ENCODE measurements at regions of chr11 and their contacts with region 1.

Region 1: GRCh38 chr11:47373876-47374720 is 4.2 kb downstream of the SPI1 start:
- DNase-seq: peak in 1 of 2 experiments; percentile 76
- H3K4me3 ChIP-seq: no peak overlapping the region
- H3K27ac ChIP-seq: no peak overlapping the region
- H3K4me1 ChIP-seq: no peaks in the 10 kb centered on the region
- H3K27me3 ChIP-seq: no peaks in the 10 kb centered on the region
- CTCF ChIP-seq: peak; percentile 98

Region 2: DNA sequence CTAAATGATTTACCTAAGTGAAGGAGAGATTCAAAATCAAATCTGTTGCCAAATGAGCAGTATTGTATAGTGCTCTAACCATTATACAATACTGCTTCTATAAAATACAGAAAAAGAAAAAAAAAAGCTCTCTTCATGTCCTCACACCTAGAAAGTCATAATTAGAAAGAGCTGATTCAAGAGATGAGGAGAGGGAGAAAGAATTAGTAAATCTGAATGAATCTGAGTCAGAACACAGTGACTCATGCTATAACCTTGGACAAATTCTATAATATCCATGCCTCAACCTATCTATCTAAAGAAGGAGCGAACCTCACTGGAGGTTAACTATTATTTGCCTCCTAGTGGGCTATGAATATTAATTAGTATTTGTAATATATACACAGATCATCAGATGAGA is 809.6 kb before region 1 on chr11:
- CTCF ChIA-PET with region 1: interaction called, 10 read pairs
- POLR2A ChIA-PET with region 1: no interaction called
- intact Hi-C with region 1: no loop called
- DNase-seq: peak in 1 of 2 experiments; percentile 71
- H3K4me3 ChIP-seq: no peak overlapping the region
- H3K27ac ChIP-seq: peak overlapping the region; percentile 73
- H3K4me1 ChIP-seq: peaks cover 53% of the 10 kb centered on the region
- H3K27me3 ChIP-seq: no peaks in the 10 kb centered on the region
- CTCF ChIP-seq: no peak

Region 3: DNA sequence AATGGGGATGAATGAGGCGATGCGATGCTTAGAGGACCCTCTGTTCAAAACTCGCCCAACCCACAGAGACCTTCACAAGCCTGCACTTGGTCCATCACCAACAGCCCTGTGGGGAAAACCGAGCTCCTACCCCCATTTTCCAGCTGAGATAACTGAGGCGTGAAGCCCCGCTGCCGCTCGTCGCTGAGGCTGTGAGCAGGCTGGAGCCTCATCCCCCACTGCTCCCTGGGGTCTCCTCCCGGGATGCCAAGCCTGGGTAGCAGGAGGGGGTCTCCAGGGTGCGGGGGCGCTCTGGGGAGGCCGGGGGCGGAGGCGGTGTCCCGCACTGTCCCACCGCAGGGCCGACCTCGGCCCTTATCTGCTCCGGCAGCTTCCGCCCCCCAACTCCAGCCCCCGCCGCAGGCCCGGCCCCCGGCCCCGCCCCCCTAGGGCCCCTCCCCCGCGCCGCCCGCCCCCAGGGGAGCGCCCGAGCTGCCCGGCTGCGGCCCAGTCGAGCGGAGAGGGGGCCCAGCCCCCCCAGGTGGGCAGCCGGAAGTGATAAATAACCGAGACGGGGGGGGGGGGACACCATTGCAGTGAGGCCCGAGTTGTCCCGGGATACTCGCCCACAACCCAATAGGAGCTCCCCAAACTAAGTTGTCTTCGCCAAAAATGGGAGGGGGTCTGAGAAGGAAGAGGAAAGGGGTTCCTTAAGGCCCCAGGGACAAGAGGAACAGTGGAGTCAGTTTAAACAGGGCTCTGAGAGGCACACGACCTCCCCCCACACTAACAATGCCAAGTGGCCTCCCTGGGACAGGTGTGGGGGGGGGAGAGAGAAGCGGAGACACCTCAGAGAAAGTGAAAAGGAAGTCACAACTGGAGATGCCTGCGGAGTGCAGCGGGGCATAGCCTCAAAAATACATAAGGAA is 26.0 kb after region 1 on chr11:
- CTCF ChIA-PET with region 1: interaction called, 14 read pairs
- POLR2A ChIA-PET with region 1: no interaction called
- intact Hi-C with region 1: no loop called
- DNase-seq: no peak
- H3K4me3 ChIP-seq: peak overlapping the region; percentile 36; the same call in 1 of the 2 replicates
- H3K27ac ChIP-seq: no peak overlapping the region
- H3K4me1 ChIP-seq: no peaks in the 10 kb centered on the region
- H3K27me3 ChIP-seq: no peaks in the 10 kb centered on the region
- CTCF ChIP-seq: no peak

Region 4: GRCh38 chr11:47616726-47617416 is 242.8 kb after region 1 on chr11:
- CTCF ChIA-PET with region 1: no interaction called
- POLR2A ChIA-PET with region 1: no interaction called
- intact Hi-C with region 1: loop called (anchors 2 kb)
- DNase-seq: peak in 1 of 2 experiments; percentile 32
- H3K4me3 ChIP-seq: no peak overlapping the region
- H3K27ac ChIP-seq: no peak overlapping the region
- H3K4me1 ChIP-seq: no peaks in the 10 kb centered on the region
- H3K27me3 ChIP-seq: no peaks in the 10 kb centered on the region
- CTCF ChIP-seq: peak; percentile 69

Measured in PC-9 (cell line).